ENCODE measurements at regions of chr5 and their contacts with region 1.

Region 1: GRCh38 chr5:112983363-112983762 is 6.8 kb downstream of the DCP2 start:
- DNase-seq: no peak
- ATAC-seq: no peak
- H3K4me3 ChIP-seq: no peak overlapping the region
- H3K27ac ChIP-seq: no peak overlapping the region
- H3K4me1 ChIP-seq: no peaks in the 10 kb centered on the region
- H3K27me3 ChIP-seq: no peaks in the 10 kb centered on the region
- CTCF ChIP-seq: no peak
- EP300 ChIP-seq: no peak
- POLR2A ChIP-seq: no peak
- RAD21 ChIP-seq: no peak

Region 2: DNA sequence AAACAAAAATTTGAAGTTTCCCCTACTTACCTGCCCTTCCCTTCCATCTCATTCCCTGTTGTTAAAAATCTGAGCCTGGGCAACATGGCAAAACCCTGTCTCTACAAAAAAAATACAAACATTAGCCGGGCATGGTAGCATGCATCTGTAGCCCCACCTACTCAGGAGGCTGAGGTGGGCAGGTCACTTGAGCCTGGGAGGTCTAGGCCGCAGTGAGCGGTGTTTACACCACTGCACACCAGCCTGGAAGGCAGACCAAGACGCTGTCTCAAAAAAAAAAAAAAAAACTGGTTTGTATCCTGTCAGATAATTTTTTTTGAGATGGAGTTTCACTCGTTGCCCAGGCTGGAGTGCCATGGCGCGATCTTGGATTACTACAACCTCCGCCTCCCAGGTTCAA is 45.1 kb before region 1 on chr5:
- CTCF ChIA-PET with region 1: no interaction called
- POLR2A ChIA-PET with region 1: no interaction called
- RAD21 ChIA-PET with region 1: no interaction called
- SMC1A ChIA-PET with region 1: no interaction called
- in situ Hi-C with region 1: no loop called
- intact Hi-C with region 1: no loop called
- DNase-seq: no peak
- ATAC-seq: no peak
- H3K4me3 ChIP-seq: no peak overlapping the region
- H3K27ac ChIP-seq: no peak overlapping the region
- H3K4me1 ChIP-seq: no peaks in the 10 kb centered on the region
- H3K27me3 ChIP-seq: no peaks in the 10 kb centered on the region
- CTCF ChIP-seq: no peak
- EP300 ChIP-seq: no peak
- POLR2A ChIP-seq: no peak
- RAD21 ChIP-seq: no peak

Region 3: GRCh38 chr5:113325054-113325453 is 341.7 kb after region 1 on chr5:
- CTCF ChIA-PET with region 1: no interaction called
- POLR2A ChIA-PET with region 1: no interaction called
- RAD21 ChIA-PET with region 1: no interaction called
- SMC1A ChIA-PET with region 1: no interaction called
- in situ Hi-C with region 1: loop called (anchors 5 kb)
- intact Hi-C with region 1: no loop called
- DNase-seq: no peak
- ATAC-seq: no peak
- H3K4me3 ChIP-seq: no peak overlapping the region
- H3K27ac ChIP-seq: no peak overlapping the region
- H3K4me1 ChIP-seq: no peaks in the 10 kb centered on the region
- H3K27me3 ChIP-seq: no peaks in the 10 kb centered on the region
- CTCF ChIP-seq: no peak
- EP300 ChIP-seq: no peak
- POLR2A ChIP-seq: no peak
- RAD21 ChIP-seq: no peak